Head of caudate nucleus (tissue), 42 donors: ENCODE measurements at regions of chr4 and their contacts with region 1.

Region 1: GRCh38 chr4:55546756-55547465 is at the start of gene CLOCK:
- DNase-seq: peak; percentile 65 to 95 (median 88)

Region 2: GRCh38 chr4:55345980-55346850 is 200.7 kb before region 1 on chr4 and contains the start of gene SRD5A3:
- intact Hi-C with region 1: loop called (anchors 2 kb)
- DNase-seq: peak; percentile 60 to 95 (median 86)

Region 3: DNA sequence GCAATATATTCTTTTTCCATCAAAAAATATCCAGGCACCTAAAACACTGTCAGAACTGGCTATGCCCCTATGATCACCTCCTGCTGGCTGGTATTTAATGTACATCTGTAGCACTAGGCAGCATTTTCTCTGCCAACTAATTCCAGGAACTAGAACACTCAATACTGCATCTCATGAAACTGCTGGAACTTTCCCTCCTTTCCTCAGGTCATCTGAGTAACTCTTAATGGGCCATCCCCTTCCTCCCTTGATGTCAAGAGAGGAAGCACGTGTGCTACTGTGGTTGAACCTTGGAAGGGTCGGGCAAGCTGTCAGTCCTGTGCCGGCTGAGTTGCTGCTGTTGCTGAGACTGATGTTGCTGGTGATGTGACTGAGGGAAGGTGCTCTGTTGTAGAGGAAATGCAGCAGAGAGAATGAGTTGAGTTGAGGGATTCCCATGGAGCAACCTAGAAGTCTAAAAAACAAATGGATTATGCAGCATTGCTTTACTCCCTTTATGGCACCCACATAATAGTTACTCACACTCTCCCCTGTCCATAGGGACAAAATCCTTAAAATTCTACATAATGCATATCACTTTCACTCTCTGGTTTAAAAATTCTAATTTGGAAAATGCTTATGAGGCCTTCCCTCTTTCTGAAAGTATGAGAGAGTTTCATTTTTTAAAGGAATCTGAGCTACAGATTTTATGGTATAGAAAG is 111.6 kb before region 1 on chr4:
- intact Hi-C with region 1: loop called (anchors 10 kb)
- DNase-seq: no peak